Ascending aorta (tissue), 2 donors: ENCODE measurements at regions of chr17 and their contacts with region 1.

Region 1: GRCh38 chr17:79839363-79840268 is at the start of gene CBX4:
- DNase-seq: peak; percentile 86 to 97
- H3K4me3 ChIP-seq: peak within 1 kb of the TSS; percentile 74 to 91
- H3K27ac ChIP-seq: peak within 1 kb of the TSS; percentile 85 to 88
- H3K4me1 ChIP-seq: peaks cover 24 to 56% of the 10 kb centered on the region in 2 donors
- H3K27me3 ChIP-seq: peaks cover 32% of the 10 kb centered on the region
- CTCF ChIP-seq: peak; percentile 50 to 65 (median 60)
- total RNA-seq, gene CBX4: 25.7 TPM

Region 2: GRCh38 chr17:79721993-79722671 is 117.5 kb before region 1 on chr17:
- intact Hi-C with region 1: no loop called
- DNase-seq: no peak
- H3K4me3 ChIP-seq: no peak overlapping the region
- H3K27ac ChIP-seq: no peak overlapping the region
- H3K4me1 ChIP-seq: no peaks in the 10 kb centered on the region
- H3K27me3 ChIP-seq: no peaks in the 10 kb centered on the region
- CTCF ChIP-seq: no peak

Region 3: DNA sequence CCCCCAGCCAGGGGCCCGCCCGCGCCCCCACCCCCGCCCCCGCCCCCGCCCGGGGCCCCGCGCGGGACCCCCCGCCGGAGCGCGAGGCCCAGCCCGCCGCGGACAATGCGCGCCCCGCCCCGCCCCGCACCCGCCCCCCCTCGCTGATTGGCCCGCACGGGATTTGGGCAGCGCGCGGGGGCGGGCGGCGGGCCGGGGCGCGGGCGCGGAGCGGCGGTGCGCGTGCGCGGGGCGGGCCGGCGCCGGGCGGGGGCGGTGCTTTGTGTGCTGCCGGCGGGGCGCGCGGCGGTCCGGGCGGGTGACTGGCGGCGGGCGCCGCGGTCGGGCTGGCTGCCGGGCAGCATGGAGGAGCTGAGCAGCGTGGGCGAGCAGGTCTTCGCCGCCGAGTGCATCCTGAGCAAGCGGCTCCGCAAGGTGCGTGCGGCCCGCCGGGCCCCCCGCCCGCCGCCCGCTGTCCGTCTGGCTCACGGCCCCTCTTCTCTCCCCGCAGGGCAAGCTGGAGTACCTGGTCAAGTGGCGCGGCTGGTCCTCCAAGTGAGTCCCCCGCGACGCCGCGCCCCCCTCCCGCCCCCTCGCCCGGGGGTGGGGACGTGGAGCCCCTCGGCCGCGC is 61.6 kb before region 1 on chr17 and contains the start of gene CBX2:
- intact Hi-C with region 1: loop called (anchors 5 kb)
- DNase-seq: peak in 1 of 2 donors; percentile 80
- H3K4me3 ChIP-seq: peak within 1 kb of the TSS; percentile 70 to 72
- H3K27ac ChIP-seq: no peak within 1 kb of the TSS
- H3K4me1 ChIP-seq: peaks cover 5 to 7% of the 10 kb centered on the region in 2 donors
- H3K27me3 ChIP-seq: peaks cover 17% of the 10 kb centered on the region
- CTCF ChIP-seq: no peak
- total RNA-seq, gene CBX2: 4.6 TPM

Region 4: GRCh38 chr17:79796763-79797491 is 42.7 kb before region 1 on chr17 and contains the start of gene CBX8:
- intact Hi-C with region 1: loop called (anchors 1 kb)
- DNase-seq: peak; percentile 96 to 100
- H3K4me3 ChIP-seq: peak within 1 kb of the TSS; percentile 79 to 82
- H3K27ac ChIP-seq: peak within 1 kb of the TSS; percentile 29 to 41
- H3K4me1 ChIP-seq: peaks cover 23 to 32% of the 10 kb centered on the region in 2 donors
- H3K27me3 ChIP-seq: peaks cover 52% of the 10 kb centered on the region
- CTCF ChIP-seq: peak in 1 of 3 experiments; percentile 10
- total RNA-seq, gene CBX8: 1.1 TPM

Region 5: GRCh38 chr17:79810130-79811010 is 29.2 kb before region 1 on chr17:
- intact Hi-C with region 1: loop called (anchors 2 kb)
- DNase-seq: no peak
- H3K4me3 ChIP-seq: peak overlapping the region; percentile 7 to 31
- H3K27ac ChIP-seq: no peak overlapping the region
- H3K4me1 ChIP-seq: peaks cover 23 to 43% of the 10 kb centered on the region in 2 donors
- H3K27me3 ChIP-seq: peaks cover 67% of the 10 kb centered on the region
- CTCF ChIP-seq: no peak

Region 6: GRCh38 chr17:79826204-79826680 is 13.4 kb before region 1 on chr17:
- intact Hi-C with region 1: no loop called
- DNase-seq: no peak
- H3K4me3 ChIP-seq: no peak overlapping the region
- H3K27ac ChIP-seq: no peak overlapping the region
- H3K4me1 ChIP-seq: peaks cover under 1 to 1% of the 10 kb centered on the region in 2 donors
- H3K27me3 ChIP-seq: no peaks in the 10 kb centered on the region
- CTCF ChIP-seq: no peak

Region 7: DNA sequence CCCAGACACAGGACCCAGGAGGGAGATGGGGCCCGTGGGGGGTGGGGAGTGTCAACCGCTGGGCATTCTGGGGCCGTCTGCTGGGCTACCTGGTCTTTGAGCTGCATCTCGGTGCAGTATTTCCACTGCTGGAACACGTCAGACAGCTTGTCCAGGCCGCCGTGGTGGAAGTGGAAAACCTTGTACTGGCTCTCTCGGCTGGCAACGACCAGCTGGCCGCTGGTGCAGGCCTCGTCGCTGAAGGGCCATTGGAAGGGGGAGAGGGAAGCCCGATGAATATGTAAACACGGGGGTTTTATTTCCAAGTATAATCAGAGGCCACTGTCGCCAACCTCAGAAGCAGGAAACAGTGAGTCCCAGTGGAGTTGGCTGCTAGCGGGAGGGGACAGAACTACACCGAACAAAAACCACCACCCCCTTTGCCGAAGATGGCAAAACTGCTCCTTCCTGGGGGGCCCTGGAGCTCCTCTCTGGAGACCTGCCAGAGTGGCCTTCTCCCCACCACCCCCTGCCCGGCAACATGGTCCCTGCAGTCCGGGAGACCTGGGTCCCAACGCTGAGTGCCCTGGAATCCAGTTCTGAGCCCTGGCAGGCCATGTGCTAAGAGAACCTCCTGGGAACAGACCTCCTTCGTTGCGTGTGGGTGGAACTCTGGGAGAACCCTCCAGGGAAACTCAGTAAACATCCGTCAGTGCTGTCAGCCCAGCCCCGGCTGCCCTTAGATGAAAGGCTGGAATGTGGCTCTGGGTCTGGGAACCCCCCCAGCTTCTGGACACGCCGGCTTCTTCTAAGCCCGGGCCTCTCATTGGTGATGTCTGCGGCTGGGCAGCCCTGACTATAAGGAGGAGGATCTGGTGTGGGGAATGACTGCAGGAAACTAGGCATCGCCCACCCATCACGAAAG is 112.0 kb after region 1 on chr17:
- intact Hi-C with region 1: no loop called
- DNase-seq: peak in 1 of 2 donors; percentile 77
- H3K4me3 ChIP-seq: peak overlapping the region; percentile 31 to 40
- H3K27ac ChIP-seq: peak overlapping the region in 1 of 2 donors; percentile 36
- H3K4me1 ChIP-seq: peaks cover 8 to 24% of the 10 kb centered on the region in 2 donors
- H3K27me3 ChIP-seq: no peaks in the 10 kb centered on the region
- CTCF ChIP-seq: no peak

Region 8: DNA sequence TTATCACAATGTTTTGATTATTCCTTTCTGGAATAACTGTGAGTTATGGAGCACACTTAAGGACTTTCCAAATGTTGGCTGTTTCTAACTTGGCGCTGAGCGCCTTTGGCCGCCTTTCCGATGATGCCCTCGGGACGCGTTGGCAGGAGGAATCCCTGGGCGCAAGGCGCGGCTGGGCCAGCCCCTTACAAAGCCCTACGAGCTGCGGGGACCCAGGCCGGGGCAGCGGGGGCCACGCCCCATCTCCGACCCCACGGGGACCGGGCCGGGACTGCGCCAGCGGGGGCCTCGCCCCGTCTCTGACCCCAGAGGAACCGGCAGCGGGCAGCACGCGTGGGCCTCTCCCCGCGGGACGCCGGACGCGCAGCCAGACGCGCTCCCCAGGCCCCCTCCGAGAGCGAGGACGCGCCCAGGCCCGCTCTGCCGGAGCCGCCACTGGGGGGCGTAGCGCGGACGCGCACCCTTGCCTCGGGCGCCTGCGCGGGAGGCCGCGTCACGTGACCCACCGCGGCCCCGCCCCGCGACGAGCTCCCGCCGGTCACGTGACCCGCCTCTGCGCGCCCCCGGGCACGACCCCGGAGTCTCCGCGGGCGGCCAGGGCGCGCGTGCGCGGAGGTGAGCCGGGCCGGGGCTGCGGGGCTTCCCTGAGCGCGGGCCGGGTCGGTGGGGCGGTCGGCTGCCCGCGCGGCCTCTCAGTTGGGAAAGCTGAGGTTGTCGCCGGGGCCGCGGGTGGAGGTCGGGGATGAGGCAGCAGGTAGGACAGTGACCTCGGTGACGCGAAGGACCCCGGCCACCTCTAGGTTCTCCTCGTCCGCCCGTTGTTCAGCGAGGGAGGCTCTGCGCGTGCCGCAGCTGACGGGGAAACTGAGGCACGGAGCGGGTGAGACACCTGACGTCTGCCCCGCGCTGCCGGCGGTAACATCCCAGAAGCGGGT is 261.7 kb after region 1 on chr17 and contains the start of gene GAA:
- intact Hi-C with region 1: loop called (anchors 5 kb)
- DNase-seq: peak; percentile 24 to 89
- H3K4me3 ChIP-seq: peak within 1 kb of the TSS; percentile 80 to 98
- H3K27ac ChIP-seq: peak within 1 kb of the TSS; percentile 81 to 93
- H3K4me1 ChIP-seq: peaks cover 3 to 7% of the 10 kb centered on the region in 2 donors
- H3K27me3 ChIP-seq: no peaks in the 10 kb centered on the region
- CTCF ChIP-seq: peak; percentile 41 to 95 (median 66)
- total RNA-seq, gene GAA: 91.6 TPM